Endothelial cell of umbilical vein (primary cell): ENCODE measurements at regions of chr5 and their contacts with region 1.

Region 1: DNA sequence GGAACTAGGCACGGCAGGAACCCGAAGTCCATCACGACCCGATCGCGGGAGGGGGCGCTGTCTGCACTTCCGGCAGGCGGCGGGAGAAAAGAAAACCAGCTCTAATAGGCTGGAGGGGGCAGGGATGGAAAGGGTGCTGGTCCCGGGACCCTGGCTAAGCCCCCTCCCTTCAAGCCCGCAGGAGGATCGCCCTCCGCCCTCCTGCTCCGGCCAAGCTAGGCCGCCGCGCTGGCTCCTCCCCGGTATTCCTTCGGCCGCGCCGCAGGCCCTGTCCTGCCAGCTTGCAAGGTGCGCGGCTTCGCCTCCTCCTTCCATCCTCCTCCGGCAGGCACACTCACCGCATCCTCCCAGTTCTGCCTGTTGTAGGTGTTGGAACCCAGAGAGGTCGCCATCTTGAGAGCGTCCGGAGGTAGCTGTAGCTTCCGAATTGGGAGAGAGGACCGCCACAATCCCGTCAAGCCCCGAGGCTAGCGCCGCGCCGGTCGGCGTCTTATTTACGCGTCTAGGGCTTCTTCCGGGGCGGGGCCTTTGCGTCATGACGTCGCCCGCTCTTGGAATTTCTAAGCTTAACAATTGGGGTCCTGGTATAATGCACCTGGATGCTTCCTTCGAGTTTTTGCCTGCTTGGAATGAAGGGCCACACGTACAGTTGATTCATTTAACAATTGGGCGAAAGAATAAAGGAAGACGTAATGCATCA is at the start of gene RBM22:
- DNase-seq: peak; percentile 92
- H3K4me3 ChIP-seq: peak within 1 kb of the TSS; percentile 45 to 98 (median 69)
- H3K27ac ChIP-seq: peak within 1 kb of the TSS; percentile 73
- H3K4me1 ChIP-seq: peaks cover 13% of the 10 kb centered on the region
- H3K27me3 ChIP-seq: peaks cover 3 to 6% of the 10 kb centered on the region in 2 experiments
- CTCF ChIP-seq: peak; percentile 40 to 78
- POLR2A ChIP-seq: peak; percentile 93
- total RNA-seq, gene RBM22: 44.4 and 51.2 TPM in 2 replicates

Region 2: GRCh38 chr5:150672237-150672883 is 28.4 kb before region 1 on chr5:
- CTCF ChIA-PET with region 1: interaction called, 16 read pairs
- POLR2A ChIA-PET with region 1: no interaction called
- dilution Hi-C with region 1: no loop called
- intact Hi-C with region 1: no loop called
- DNase-seq: peak; percentile 47
- H3K4me3 ChIP-seq: peak overlapping the region; percentile 43 to 55 (median 53)
- H3K27ac ChIP-seq: no peak overlapping the region
- H3K4me1 ChIP-seq: peaks cover 13% of the 10 kb centered on the region
- H3K27me3 ChIP-seq: peaks cover 8 to 12% of the 10 kb centered on the region in 2 experiments
- CTCF ChIP-seq: no peak
- POLR2A ChIP-seq: no peak

Region 3: GRCh38 chr5:150758531-150759333 is 58.0 kb after region 1 on chr5 and contains the start of gene DCTN4:
- CTCF ChIA-PET with region 1: interaction called, 3 read pairs
- POLR2A ChIA-PET with region 1: interaction called, 5 read pairs
- dilution Hi-C with region 1: no loop called
- intact Hi-C with region 1: loop called (anchors 2 kb)
- DNase-seq: peak; percentile 99
- H3K4me3 ChIP-seq: peak within 1 kb of the TSS; percentile 62 to 80 (median 62)
- H3K27ac ChIP-seq: peak within 1 kb of the TSS; percentile 76
- H3K4me1 ChIP-seq: peaks cover 13% of the 10 kb centered on the region
- H3K27me3 ChIP-seq: peaks cover 0 to 5% of the 10 kb centered on the region in 2 experiments
- CTCF ChIP-seq: no peak
- POLR2A ChIP-seq: peak; percentile 84
- total RNA-seq, gene DCTN4: 42.8 and 47.3 TPM in 2 replicates